Activated CD4-positive, alpha-beta T cell treated with anti-CD3 and anti-CD28 coated beads, Interleukin-2, amount 10 ng/mL, durations not matched to agents 24 days and 14 days (primary cell): ENCODE measurements at regions of chr19 and their contacts with region 1.

Region 1: GRCh38 chr19:6674868-6675305 is 4.9 kb upstream of the TNFSF14 start:
- DNase-seq: peak; percentile 95
- H3K4me3 Mint-ChIP-seq: peak overlapping the region; percentile 71
- H3K27ac Mint-ChIP-seq: peak overlapping the region; percentile 93
- H3K4me1 Mint-ChIP-seq: peaks cover 67% of the 10 kb centered on the region
- H3K27me3 Mint-ChIP-seq: peaks cover 3% of the 10 kb centered on the region

Region 2: DNA sequence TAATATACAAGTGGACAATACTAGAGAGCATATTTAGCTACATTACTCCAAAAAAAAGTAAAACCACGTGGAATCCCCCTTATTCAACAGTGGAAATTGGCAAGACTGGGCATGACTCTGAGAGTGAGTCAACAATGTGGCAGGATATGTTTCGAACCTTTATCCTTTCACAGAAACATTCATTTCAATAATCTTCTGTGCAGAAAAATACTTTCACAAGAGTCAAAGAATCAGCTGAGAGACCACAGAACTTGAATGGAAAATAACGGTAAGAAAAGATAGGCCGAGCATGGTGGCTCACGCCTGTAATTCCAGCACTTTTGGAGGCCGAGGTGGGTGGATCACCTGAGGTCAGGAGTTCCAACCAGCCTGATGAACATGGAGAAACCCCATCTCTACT is 58.9 kb before region 1 on chr19:
- intact Hi-C with region 1: loop called (anchors 1 kb)
- DNase-seq: peak; percentile 68
- H3K4me3 Mint-ChIP-seq: no peak overlapping the region
- H3K27ac Mint-ChIP-seq: peak overlapping the region; percentile 73
- H3K4me1 Mint-ChIP-seq: peaks cover 22% of the 10 kb centered on the region
- H3K27me3 Mint-ChIP-seq: peaks cover 25% of the 10 kb centered on the region

Region 3: GRCh38 chr19:6632002-6632621 is 42.8 kb before region 1 on chr19:
- intact Hi-C with region 1: loop called (anchors 2 kb)
- DNase-seq: peak; percentile 96
- H3K4me3 Mint-ChIP-seq: no peak overlapping the region
- H3K27ac Mint-ChIP-seq: no peak overlapping the region
- H3K4me1 Mint-ChIP-seq: peaks cover 26% of the 10 kb centered on the region
- H3K27me3 Mint-ChIP-seq: peaks cover 2% of the 10 kb centered on the region

Region 4: DNA sequence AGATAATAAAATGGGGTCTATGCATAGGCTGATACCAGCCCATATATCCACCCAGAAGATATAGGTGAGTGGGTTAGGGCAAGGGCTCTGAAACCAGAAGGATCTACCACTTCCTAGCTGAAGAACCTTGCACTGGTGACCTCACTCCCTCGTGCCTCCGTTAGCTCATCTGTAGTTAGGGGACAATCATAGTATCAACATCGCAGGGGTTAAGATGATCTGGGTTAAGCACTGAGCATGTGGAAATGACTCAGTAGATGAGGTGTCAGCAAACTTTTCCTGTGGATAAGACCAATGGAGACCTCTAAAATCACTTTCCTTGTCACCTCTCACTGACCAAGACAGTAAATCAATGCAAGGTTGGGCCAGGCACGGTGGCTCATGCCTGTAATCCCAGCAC is 35.4 kb before region 1 on chr19:
- intact Hi-C with region 1: loop called (anchors 2 kb)
- DNase-seq: peak; percentile 77
- H3K4me3 Mint-ChIP-seq: peak overlapping the region; percentile 40
- H3K27ac Mint-ChIP-seq: peak overlapping the region; percentile 87
- H3K4me1 Mint-ChIP-seq: peaks cover 36% of the 10 kb centered on the region
- H3K27me3 Mint-ChIP-seq: no peaks in the 10 kb centered on the region

Region 5: DNA sequence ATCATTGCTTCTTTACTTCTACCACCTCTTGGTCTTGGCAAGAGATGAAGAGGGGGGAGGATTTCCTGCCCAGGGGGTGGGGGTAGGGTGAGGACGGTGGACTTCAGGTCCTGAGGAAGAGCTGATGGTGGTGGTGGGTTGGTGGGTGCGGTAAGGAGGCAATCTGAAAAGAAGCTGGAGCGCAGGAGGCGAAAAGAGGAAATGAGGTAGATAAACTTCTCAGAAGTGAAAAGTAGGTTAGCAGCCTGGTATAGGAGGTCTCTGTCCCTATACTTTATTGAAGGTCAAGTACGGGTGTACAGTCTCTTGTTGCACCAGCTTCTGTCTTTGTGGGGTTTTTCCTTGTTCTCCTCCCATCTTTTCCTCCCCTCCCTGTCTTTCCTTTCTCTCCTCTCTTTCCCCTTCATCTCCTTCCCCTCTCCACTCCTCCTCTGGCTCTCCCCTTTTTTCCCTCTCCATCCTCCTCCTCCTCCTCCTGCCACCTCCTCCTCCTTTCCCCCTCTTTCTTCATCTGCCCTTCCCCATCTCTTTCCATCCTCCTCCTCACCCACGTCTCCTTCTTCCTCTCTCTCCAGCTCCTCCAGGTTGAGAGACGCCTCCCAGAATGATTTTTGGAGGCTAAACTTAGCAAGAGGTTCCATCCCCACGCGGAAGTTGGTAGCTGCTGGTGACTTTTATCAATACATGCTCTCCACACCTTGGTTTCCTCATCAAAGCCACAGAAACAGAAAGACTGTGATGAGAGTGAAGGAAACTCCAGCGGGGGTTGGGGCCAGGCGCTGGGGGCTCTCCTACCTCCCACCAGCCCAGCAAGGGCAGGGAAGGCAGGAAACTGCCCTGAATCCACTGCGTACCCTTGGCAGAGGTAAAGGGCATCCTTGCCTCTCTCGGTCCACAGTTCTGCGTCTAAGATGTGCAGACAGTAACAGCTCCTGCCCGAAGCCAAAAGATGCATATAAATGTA is 20.3 kb before region 1 on chr19:
- intact Hi-C with region 1: loop called (anchors 1 kb)
- DNase-seq: peak; percentile 87
- H3K4me3 Mint-ChIP-seq: peak overlapping the region; percentile 83
- H3K27ac Mint-ChIP-seq: peak overlapping the region; percentile 98
- H3K4me1 Mint-ChIP-seq: peaks cover 57% of the 10 kb centered on the region
- H3K27me3 Mint-ChIP-seq: no peaks in the 10 kb centered on the region

Region 6: DNA sequence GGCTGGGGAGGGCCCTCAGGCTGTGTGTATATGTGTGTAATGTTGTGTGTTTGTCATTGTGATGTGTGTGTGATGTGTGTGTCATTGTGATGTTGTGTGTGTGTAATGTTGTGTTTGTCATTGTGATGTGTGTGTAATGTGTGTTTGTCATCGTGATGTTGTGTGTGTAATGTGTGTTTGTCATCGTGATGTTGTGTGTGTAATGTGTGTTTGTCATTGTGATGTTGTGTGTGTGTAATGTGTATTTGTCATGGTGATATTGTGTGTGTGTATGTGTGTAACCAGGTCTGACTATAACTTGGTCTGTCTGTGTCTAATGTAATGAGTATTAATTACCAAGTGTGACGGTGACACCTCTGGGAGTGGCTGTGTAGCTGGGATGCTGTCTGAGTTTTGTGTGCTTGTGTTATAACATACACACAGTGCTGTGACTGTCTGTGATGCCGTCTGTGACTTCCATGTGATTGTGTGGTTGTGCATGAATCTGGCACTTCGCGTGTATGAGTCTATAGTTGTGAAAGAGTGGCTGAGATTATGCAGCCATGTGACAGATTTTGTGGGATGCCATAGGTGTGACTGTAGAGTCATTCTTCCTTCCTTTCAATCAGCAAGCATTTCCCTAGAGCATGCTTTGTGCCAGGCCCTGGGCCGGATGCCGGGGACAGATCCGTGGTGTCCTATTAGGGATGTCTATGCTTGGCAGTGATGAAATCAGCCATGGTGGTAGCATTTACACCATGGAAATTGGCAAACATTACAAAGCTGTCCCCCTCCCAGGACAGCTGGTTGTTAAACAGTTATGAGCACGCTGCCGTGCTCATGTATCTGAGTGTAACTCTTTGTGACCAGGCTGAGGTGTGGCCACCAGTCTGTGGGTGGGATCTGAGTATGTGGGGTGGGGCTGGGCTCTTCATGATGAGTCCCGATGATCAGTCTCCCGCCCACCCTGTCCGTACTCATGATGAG is 11.4 kb before region 1 on chr19:
- intact Hi-C with region 1: loop called (anchors 1 kb)
- DNase-seq: no peak
- H3K4me3 Mint-ChIP-seq: peak overlapping the region; percentile 39
- H3K27ac Mint-ChIP-seq: no peak overlapping the region
- H3K4me1 Mint-ChIP-seq: peaks cover 46% of the 10 kb centered on the region
- H3K27me3 Mint-ChIP-seq: no peaks in the 10 kb centered on the region

Region 7: GRCh38 chr19:6790194-6791128 is 115.6 kb after region 1 on chr19:
- intact Hi-C with region 1: no loop called
- DNase-seq: no peak
- H3K4me3 Mint-ChIP-seq: no peak overlapping the region
- H3K27ac Mint-ChIP-seq: no peak overlapping the region
- H3K4me1 Mint-ChIP-seq: peaks cover 43% of the 10 kb centered on the region
- H3K27me3 Mint-ChIP-seq: no peaks in the 10 kb centered on the region

Region 8: GRCh38 chr19:6811906-6812305 is 137.0 kb after region 1 on chr19:
- intact Hi-C with region 1: no loop called
- DNase-seq: no peak
- H3K4me3 Mint-ChIP-seq: no peak overlapping the region
- H3K27ac Mint-ChIP-seq: no peak overlapping the region
- H3K4me1 Mint-ChIP-seq: peaks cover 44% of the 10 kb centered on the region
- H3K27me3 Mint-ChIP-seq: no peaks in the 10 kb centered on the region